GM23248 (cell line): ENCODE measurements at regions of chr10 and their contacts with region 1.

Region 1: GRCh38 chr10:113519681-113520115 is 33.2 kb upstream of the HABP2 start:
- DNase-seq: no peak
- H3K4me3 ChIP-seq: no peak overlapping the region
- H3K27ac ChIP-seq: no peak overlapping the region
- H3K4me1 ChIP-seq: peaks cover 29% of the 10 kb centered on the region
- H3K27me3 ChIP-seq: no peaks in the 10 kb centered on the region

Region 2: GRCh38 chr10:113399065-113399464 is 120.6 kb before region 1 on chr10:
- in situ Hi-C with region 1: loop called (anchors 10 kb)
- DNase-seq: peak; percentile 69
- H3K4me3 ChIP-seq: no peak overlapping the region
- H3K27ac ChIP-seq: peak overlapping the region; percentile 56
- H3K4me1 ChIP-seq: peaks cover 14% of the 10 kb centered on the region
- H3K27me3 ChIP-seq: no peaks in the 10 kb centered on the region